IMR-90 (cell line): ENCODE measurements at regions of chr16 and their contacts with region 1.

Region 1: GRCh38 chr16:63856537-63856936 is 1265.3 kb downstream of the CDH11 start:
- DNase-seq: no peak
- ATAC-seq: no peak
- H3K4me3 ChIP-seq: no peak overlapping the region
- H3K27ac ChIP-seq: no peak overlapping the region
- H3K4me1 ChIP-seq: no peaks in the 10 kb centered on the region
- H3K27me3 ChIP-seq: no peaks in the 10 kb centered on the region
- CTCF ChIP-seq: no peak
- POLR2A ChIP-seq: no peak
- RAD21 ChIP-seq: no peak

Region 2: DNA sequence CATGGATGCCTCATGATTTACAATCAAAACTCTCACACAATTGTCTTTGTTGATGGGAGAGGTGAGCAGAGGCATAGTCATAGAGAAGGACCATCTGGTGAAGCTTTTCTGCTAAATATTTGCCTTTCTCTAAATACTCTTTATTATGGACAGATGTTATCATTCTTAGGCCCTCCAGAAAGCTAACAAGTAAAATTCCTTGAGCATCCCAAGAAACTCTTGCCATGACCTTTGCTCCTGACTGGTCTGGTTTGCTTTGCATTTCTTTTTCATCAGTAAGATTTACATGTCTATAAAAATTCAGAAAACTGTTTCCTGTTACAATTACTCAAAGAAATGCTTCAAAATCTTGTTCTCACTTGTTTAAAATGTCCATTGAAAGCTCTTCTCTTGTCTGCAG is 483.7 kb before region 1 on chr16:
- CTCF ChIA-PET with region 1: no interaction called
- POLR2A ChIA-PET with region 1: no interaction called
- dilution Hi-C with region 1: no loop called
- in situ Hi-C with region 1: no loop called
- intact Hi-C with region 1: loop called (anchors 10 kb)
- DNase-seq: no peak
- ATAC-seq: no peak
- H3K4me3 ChIP-seq: no peak overlapping the region
- H3K27ac ChIP-seq: no peak overlapping the region
- H3K4me1 ChIP-seq: no peaks in the 10 kb centered on the region
- H3K27me3 ChIP-seq: no peaks in the 10 kb centered on the region
- CTCF ChIP-seq: no peak
- POLR2A ChIP-seq: no peak
- RAD21 ChIP-seq: no peak

Region 3: GRCh38 chr16:64695684-64696083 is 839.1 kb after region 1 on chr16:
- CTCF ChIA-PET with region 1: no interaction called
- POLR2A ChIA-PET with region 1: no interaction called
- dilution Hi-C with region 1: no loop called
- in situ Hi-C with region 1: no loop called
- intact Hi-C with region 1: no loop called
- DNase-seq: no peak
- ATAC-seq: no peak
- H3K4me3 ChIP-seq: no peak overlapping the region
- H3K27ac ChIP-seq: no peak overlapping the region
- H3K4me1 ChIP-seq: no peaks in the 10 kb centered on the region
- H3K27me3 ChIP-seq: no peaks in the 10 kb centered on the region; the same call in 1 of the 2 replicates
- CTCF ChIP-seq: no peak
- POLR2A ChIP-seq: no peak
- RAD21 ChIP-seq: no peak